ENCODE measurements at regions of chr3 and their contacts with region 1.

Region 1: DNA sequence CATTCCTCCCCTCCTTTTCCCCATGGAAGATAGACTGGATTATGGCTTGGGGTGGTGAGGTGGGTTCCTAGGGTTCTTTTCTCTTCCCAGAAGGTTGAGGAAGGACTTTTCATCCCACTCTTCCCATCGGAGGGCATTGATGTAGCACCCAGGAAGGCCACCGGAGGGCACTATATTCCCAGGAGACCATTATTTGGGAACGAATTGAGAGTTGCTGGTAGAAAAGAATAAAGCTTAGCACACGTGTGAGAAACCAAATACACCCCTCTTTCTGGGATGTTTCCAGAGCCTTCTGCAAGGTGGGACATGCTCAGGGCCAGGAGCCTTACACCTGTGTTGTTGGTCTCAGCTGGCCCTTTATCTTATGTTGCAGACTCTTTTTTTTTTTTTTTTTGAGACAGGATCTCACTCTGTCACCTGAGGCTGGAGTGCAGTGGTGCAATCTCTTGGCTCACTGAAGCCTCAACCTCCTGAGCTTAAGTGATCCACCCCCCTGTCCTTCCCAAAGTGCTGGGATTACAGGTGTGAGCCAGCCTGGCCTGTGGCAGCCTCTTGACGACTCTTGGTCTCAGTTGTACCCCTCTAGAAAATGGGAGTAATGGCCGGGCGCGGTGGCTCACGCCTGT is 6.3 kb upstream of the CDC25A start:
- DNase-seq: peak; percentile 23
- ATAC-seq: peak; percentile 59
- H3K4me3 ChIP-seq: no peak overlapping the region
- H3K27ac ChIP-seq: no peak overlapping the region
- H3K4me1 ChIP-seq: no peaks in the 10 kb centered on the region
- H3K27me3 ChIP-seq: no peaks in the 10 kb centered on the region
- CTCF ChIP-seq: peak; percentile 77 to 79 (median 79); a peak in 5 of 6 replicates
- EP300 ChIP-seq: no peak
- POLR2A ChIP-seq: no peak
- RAD21 ChIP-seq: peak; percentile 87

Region 2: GRCh38 chr3:47976135-47976732 is 218.3 kb before region 1 on chr3:
- CTCF ChIA-PET with region 1: no interaction called
- POLR2A ChIA-PET with region 1: no interaction called
- RAD21 ChIA-PET with region 1: no interaction called
- SMC1A ChIA-PET with region 1: no interaction called
- in situ Hi-C with region 1: no loop called
- intact Hi-C with region 1: no loop called
- DNase-seq: no peak
- ATAC-seq: peak; percentile 78
- H3K4me3 ChIP-seq: no peak overlapping the region; the same call in 1 of the 2 replicates
- H3K27ac ChIP-seq: peak overlapping the region; percentile 63
- H3K4me1 ChIP-seq: peaks cover 17% of the 10 kb centered on the region
- H3K27me3 ChIP-seq: no peaks in the 10 kb centered on the region
- CTCF ChIP-seq: no peak
- EP300 ChIP-seq: no peak
- POLR2A ChIP-seq: no peak
- RAD21 ChIP-seq: no peak

Region 3: DNA sequence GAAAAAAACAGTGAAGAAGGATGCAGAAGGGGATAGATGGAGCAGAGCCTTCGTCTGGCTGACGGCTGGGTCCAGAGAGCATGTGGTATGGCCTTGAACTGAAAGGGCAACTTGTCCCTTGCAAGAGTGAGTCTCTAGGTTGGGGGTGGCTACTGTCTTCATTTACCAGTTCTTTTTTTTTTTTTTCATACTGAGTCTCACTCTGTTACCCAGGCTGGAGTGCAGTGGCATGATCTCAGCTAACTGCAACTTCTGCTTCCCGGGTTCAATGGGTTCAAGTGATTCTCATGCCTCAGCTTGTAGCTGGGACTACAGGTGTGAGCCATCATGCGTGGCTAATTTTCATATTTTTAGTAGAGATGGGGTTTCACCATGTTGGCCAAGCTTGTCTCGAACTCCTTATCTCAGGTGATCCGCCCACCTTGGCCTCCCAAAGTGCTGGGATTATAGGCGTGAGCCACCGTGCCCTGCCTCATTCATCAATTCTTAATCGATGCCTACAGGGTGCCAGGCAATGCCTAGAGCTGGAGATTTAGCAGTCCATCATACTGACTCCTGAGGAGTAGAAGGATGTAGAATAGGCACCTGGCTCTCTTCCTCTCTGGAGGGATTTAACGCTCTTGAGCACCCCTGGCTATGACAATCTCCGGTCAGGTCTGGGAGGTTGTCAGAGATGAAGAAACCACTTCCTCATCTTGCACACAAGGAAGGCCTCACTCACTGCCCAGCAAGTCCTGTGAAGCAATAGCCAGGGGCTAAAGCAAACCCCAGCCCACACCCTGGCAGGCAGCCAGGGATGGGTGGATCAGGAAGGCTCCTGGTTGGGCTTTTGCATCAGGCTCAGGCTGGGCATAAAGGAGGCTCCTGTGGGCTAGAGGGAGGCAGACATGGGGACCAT is 28.3 kb after region 1 on chr3 and contains the start of gene CAMP:
- CTCF ChIA-PET with region 1: interaction called, 18 read pairs
- POLR2A ChIA-PET with region 1: no interaction called
- RAD21 ChIA-PET with region 1: interaction called, 4 read pairs
- SMC1A ChIA-PET with region 1: interaction called, 12 read pairs
- in situ Hi-C with region 1: no loop called
- intact Hi-C with region 1: no loop called
- DNase-seq: peak; percentile 84
- ATAC-seq: peak; percentile 81
- H3K4me3 ChIP-seq: no peak within 1 kb of the TSS
- H3K27ac ChIP-seq: peak within 1 kb of the TSS; percentile 71
- H3K4me1 ChIP-seq: peaks cover 61% of the 10 kb centered on the region
- H3K27me3 ChIP-seq: no peaks in the 10 kb centered on the region
- CTCF ChIP-seq: no peak
- EP300 ChIP-seq: no peak
- POLR2A ChIP-seq: peak; percentile 22; the same call in 1 of the 2 replicates
- RAD21 ChIP-seq: no peak
- polyA plus RNA-seq, gene CAMP: 25.4 to 34.3 TPM

Region 4: GRCh38 chr3:48232734-48233133 is 38.2 kb after region 1 on chr3:
- CTCF ChIA-PET with region 1: interaction called, 47 read pairs
- POLR2A ChIA-PET with region 1: interaction called, 3 read pairs
- RAD21 ChIA-PET with region 1: interaction called, 6 read pairs
- SMC1A ChIA-PET with region 1: interaction called, 5 read pairs
- in situ Hi-C with region 1: no loop called
- intact Hi-C with region 1: loop called (anchors 5 kb)
- DNase-seq: peak; percentile 63
- ATAC-seq: peak; percentile 100
- H3K4me3 ChIP-seq: peak overlapping the region; percentile 6; the same call in 1 of the 2 replicates
- H3K27ac ChIP-seq: peak overlapping the region; percentile 24; the same call in 1 of the 2 replicates
- H3K4me1 ChIP-seq: peaks cover 39% of the 10 kb centered on the region
- H3K27me3 ChIP-seq: no peaks in the 10 kb centered on the region
- CTCF ChIP-seq: peak; percentile 63 to 90 (median 85)
- EP300 ChIP-seq: no peak
- POLR2A ChIP-seq: no peak
- RAD21 ChIP-seq: peak; percentile 68

Region 5: DNA sequence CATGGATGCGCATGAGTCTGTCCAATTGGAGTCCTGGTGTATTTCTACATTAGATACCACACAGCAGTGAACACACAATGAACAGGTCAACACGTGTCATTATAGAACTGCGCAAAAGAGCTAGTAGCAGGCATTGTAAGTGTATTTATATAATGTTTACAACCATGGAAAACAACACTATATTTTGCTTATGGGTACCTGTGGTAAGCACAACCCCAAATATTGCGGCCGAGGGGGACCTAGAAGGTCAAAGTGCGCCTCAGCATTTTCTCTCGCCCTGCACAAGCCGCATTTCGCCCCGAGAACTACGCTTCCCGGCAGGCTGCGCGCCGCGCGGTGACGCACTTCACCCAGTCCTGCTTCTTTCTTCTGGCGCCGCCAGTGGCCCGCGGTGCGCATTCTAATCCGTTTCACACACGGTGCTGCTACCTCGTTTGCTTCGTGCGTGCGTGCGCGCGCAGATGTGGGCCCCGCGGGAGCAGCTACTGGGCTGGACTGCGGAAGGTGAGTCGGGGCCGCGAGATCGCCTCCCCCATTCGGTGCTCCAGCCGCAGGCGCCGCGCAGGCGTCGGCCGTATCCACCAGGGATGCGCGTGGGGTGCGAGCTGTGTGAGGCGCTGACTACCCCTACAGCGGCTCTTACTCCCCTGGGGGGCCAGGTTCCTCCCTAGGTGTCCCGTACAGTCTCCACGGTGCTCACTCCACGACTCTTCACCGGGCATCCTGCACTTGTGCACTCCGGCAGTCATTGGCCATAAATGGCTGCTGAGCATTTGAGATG is 46.3 kb after region 1 on chr3 and contains the start of gene ZNF589:
- CTCF ChIA-PET with region 1: interaction called, 12 read pairs
- POLR2A ChIA-PET with region 1: interaction called, 3 read pairs
- RAD21 ChIA-PET with region 1: interaction called, 11 read pairs
- SMC1A ChIA-PET with region 1: interaction called, 6 read pairs
- in situ Hi-C with region 1: no loop called
- intact Hi-C with region 1: no loop called
- DNase-seq: peak; percentile 87
- ATAC-seq: peak; percentile 98
- H3K4me3 ChIP-seq: peak within 1 kb of the TSS; percentile 96
- H3K27ac ChIP-seq: peak within 1 kb of the TSS; percentile 74
- H3K4me1 ChIP-seq: peaks cover 7% of the 10 kb centered on the region; the same call in 1 of the 2 replicates
- H3K27me3 ChIP-seq: no peaks in the 10 kb centered on the region
- CTCF ChIP-seq: peak in 2 of 3 experiments; percentile 39 to 59; a peak in 5 of 6 replicates
- EP300 ChIP-seq: no peak
- POLR2A ChIP-seq: peak; percentile 99
- RAD21 ChIP-seq: 0 out of 2 replicates have a peak, but pooled peaks have one; percentile 15
- polyA plus RNA-seq, gene ZNF589: 6.5 to 10.1 TPM

Region 6: GRCh38 chr3:48256557-48256956 is 62.0 kb after region 1 on chr3:
- CTCF ChIA-PET with region 1: no interaction called
- POLR2A ChIA-PET with region 1: no interaction called
- RAD21 ChIA-PET with region 1: no interaction called
- SMC1A ChIA-PET with region 1: no interaction called
- in situ Hi-C with region 1: no loop called
- intact Hi-C with region 1: no loop called
- DNase-seq: no peak
- ATAC-seq: no peak
- H3K4me3 ChIP-seq: no peak overlapping the region
- H3K27ac ChIP-seq: no peak overlapping the region
- H3K4me1 ChIP-seq: no peaks in the 10 kb centered on the region
- H3K27me3 ChIP-seq: no peaks in the 10 kb centered on the region
- CTCF ChIP-seq: no peak
- EP300 ChIP-seq: no peak
- POLR2A ChIP-seq: no peak
- RAD21 ChIP-seq: no peak

Region 7: DNA sequence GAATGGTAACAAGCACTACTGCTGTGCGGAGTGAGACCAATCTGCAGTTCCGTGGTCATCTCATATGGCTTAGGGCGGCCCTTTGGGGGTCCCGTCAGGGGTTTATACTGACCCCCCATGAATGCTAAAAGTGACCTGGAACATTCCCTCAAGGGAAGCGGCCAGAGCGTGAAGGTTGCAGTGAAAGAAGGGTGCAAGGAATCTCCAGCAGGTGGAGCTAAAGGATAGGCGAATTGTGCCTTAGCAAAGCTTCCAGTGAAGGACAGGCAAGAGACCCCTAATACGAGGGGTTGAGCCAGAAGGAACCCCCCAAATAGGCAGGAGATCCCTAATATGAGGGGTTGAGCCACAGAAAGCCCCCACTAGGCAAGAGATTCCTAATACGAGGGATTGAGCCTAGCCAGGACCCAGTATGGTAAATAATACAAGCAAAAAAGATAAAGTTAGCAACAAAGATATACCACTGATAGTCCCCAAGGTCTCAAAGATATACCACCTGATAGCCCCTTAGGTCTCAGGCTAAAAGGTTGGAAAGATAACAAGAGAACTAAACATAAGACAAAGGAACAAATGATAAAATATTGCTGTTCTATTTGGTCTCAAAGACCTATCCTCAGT is 79.1 kb after region 1 on chr3:
- CTCF ChIA-PET with region 1: interaction called, 11 read pairs
- POLR2A ChIA-PET with region 1: interaction called, 7 read pairs
- RAD21 ChIA-PET with region 1: interaction called, 5 read pairs
- SMC1A ChIA-PET with region 1: interaction called, 5 read pairs
- in situ Hi-C with region 1: no loop called
- intact Hi-C with region 1: no loop called
- DNase-seq: peak; percentile 30
- ATAC-seq: peak; percentile 91
- H3K4me3 ChIP-seq: no peak overlapping the region
- H3K27ac ChIP-seq: no peak overlapping the region
- H3K4me1 ChIP-seq: no peaks in the 10 kb centered on the region
- H3K27me3 ChIP-seq: no peaks in the 10 kb centered on the region
- CTCF ChIP-seq: peak; percentile 73 to 85 (median 76)
- EP300 ChIP-seq: no peak
- POLR2A ChIP-seq: no peak
- RAD21 ChIP-seq: peak; percentile 84

Region 8: GRCh38 chr3:48432411-48433372 is 238.1 kb after region 1 on chr3:
- CTCF ChIA-PET with region 1: interaction called, 85 read pairs
- POLR2A ChIA-PET with region 1: interaction called, 5 read pairs
- RAD21 ChIA-PET with region 1: interaction called, 66 read pairs
- SMC1A ChIA-PET with region 1: interaction called, 31 read pairs
- in situ Hi-C with region 1: no loop called
- intact Hi-C with region 1: no loop called
- DNase-seq: no peak
- ATAC-seq: peak; percentile 2; the same call in 1 of the 3 replicates
- H3K4me3 ChIP-seq: no peak overlapping the region
- H3K27ac ChIP-seq: peak overlapping the region; percentile 54
- H3K4me1 ChIP-seq: peaks cover 19% of the 10 kb centered on the region
- H3K27me3 ChIP-seq: no peaks in the 10 kb centered on the region
- CTCF ChIP-seq: peak in 2 of 3 experiments; percentile 18; a peak in 3 of 6 replicates
- EP300 ChIP-seq: no peak
- POLR2A ChIP-seq: no peak
- RAD21 ChIP-seq: no peak

Measured in GM12878 (cell line).